ENCODE measurements at regions of chrX and their contacts with region 1.

Region 1: DNA sequence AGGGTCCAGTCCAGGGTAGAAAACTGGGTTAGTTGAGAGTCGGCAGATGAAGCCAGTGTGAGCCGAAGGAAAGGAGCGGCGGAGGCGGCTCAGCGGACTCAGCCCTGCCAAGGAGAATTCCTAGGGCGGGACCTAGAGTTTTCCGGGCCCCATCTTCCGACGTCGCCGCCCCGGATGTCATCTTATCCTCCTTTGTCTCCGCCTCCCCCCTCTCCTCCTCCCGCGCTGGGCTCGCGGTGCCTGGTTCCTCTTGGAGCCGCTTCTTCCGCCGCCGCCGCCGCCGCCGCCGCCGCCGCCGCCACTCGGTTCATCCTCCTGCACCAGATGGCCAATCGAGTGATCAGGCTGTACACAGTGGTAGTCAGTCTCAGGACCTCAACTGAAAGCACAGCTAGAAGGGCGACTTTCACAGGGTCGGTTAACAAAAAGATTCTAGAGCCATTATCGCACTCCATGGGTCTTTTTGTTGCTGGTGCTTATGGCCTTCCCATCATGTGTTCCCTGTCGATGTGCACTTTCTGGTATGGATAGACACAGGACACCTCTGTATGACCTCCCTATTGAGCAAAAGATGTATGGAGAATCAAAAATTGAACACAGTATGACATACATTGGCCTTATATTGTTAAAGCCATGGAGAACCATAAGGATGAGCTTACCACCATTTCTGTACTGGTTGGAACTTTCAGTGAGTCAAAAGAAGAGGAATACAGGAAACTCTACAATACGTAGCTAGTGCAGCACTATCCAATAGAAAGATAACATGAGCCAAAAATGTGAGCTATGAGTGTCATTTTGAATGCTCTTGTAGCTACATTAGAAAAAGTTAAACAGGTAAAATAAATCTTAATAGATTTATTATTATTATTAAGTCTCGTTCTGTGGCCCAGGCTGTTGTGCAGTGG is 32.4 kb upstream of the THOC2 start:
- DNase-seq: peak; percentile 82 to 90
- H3K4me3 ChIP-seq: peak overlapping the region; percentile 54
- H3K27ac ChIP-seq: peak overlapping the region; percentile 44
- H3K4me1 ChIP-seq: peaks cover 9% of the 10 kb centered on the region; the same call in 1 of the 2 replicates
- H3K27me3 ChIP-seq: no peaks in the 10 kb centered on the region
- CTCF ChIP-seq: no peak

Region 2: DNA sequence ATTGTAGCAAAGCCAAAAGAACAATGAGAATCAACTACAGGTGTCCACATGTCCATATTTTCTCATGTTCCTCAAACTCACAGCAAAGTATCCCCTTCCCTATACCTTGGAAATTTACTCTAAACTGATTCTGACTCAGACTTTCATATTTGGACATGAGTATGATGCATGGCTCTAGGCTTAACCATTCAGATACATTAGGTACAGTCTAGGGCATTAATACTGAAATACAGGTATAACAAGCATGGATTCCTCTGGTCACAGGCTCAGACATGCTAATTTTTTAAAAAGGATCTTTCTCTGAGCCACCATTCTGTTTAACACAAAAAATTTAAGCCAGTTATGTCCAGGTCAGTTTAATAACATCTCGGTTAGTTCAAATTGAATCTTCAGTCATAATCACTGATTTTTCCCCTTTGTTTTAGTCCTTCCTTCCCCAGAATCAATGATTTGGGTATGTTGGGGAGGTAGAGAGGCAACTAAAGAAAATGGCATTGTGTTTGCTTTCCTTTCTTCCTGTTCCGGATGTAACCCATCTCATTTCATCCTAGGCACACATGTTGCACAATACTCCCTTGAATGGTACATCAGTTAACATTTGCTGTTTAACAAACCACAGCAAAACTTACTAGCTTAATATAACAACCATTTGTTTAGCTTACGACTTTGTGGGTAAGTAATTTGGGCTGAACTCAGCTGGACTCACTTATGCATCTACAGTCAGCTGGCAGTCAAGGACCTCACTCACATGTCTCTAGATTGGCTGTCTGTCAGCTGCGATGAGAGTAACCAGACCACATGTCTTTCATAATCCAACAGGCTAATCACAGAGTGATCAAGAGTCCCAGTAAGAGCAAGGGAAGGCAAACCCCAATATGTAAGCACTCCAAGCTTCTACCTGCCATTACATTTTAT is 656.4 kb before region 1 on chrX:
- CTCF ChIA-PET with region 1: no interaction called
- POLR2A ChIA-PET with region 1: no interaction called
- intact Hi-C with region 1: no loop called
- DNase-seq: no peak
- H3K4me3 ChIP-seq: no peak overlapping the region
- H3K27ac ChIP-seq: no peak overlapping the region
- H3K4me1 ChIP-seq: no peaks in the 10 kb centered on the region
- H3K27me3 ChIP-seq: no peaks in the 10 kb centered on the region
- CTCF ChIP-seq: no peak

Region 3: GRCh38 chrX:123740006-123740405 is 25.2 kb before region 1 on chrX:
- CTCF ChIA-PET with region 1: interaction called, 10 read pairs
- POLR2A ChIA-PET with region 1: no interaction called
- intact Hi-C with region 1: no loop called
- DNase-seq: no peak
- H3K4me3 ChIP-seq: no peak overlapping the region
- H3K27ac ChIP-seq: no peak overlapping the region
- H3K4me1 ChIP-seq: no peaks in the 10 kb centered on the region
- H3K27me3 ChIP-seq: no peaks in the 10 kb centered on the region
- CTCF ChIP-seq: no peak; the same call in 1 of the 2 replicates

Measured in PC-9 (cell line).